ENCODE measurements at regions of chr3 and their contacts with region 1.

Region 1: GRCh38 chr3:42096796-42097565 is 5.8 kb downstream of the TRAK1 start:
- DNase-seq: no peak
- H3K4me3 ChIP-seq: no peak overlapping the region
- H3K27ac ChIP-seq: no peak overlapping the region
- H3K4me1 ChIP-seq: no peaks in the 10 kb centered on the region
- H3K27me3 ChIP-seq: no peaks in the 10 kb centered on the region
- CTCF ChIP-seq: no peak

Region 2: GRCh38 chr3:41893977-41894376 is 203.0 kb before region 1 on chr3:
- intact Hi-C with region 1: loop called (anchors 5 kb)
- DNase-seq: peak; percentile 37
- H3K4me3 ChIP-seq: no peak overlapping the region
- H3K27ac ChIP-seq: no peak overlapping the region
- H3K4me1 ChIP-seq: no peaks in the 10 kb centered on the region
- H3K27me3 ChIP-seq: no peaks in the 10 kb centered on the region
- CTCF ChIP-seq: peak; percentile 45

Region 3: GRCh38 chr3:41961750-41962679 is 135.0 kb before region 1 on chr3 and contains the start of gene ULK4:
- intact Hi-C with region 1: loop called (anchors 5 kb)
- DNase-seq: peak; percentile 98
- H3K4me3 ChIP-seq: peak within 1 kb of the TSS; percentile 89
- H3K27ac ChIP-seq: peak within 1 kb of the TSS; percentile 82
- H3K4me1 ChIP-seq: peaks cover 5% of the 10 kb centered on the region
- H3K27me3 ChIP-seq: no peaks in the 10 kb centered on the region
- CTCF ChIP-seq: no peak
- total RNA-seq, gene ULK4: 4.4 to 8.3 TPM

Region 4: DNA sequence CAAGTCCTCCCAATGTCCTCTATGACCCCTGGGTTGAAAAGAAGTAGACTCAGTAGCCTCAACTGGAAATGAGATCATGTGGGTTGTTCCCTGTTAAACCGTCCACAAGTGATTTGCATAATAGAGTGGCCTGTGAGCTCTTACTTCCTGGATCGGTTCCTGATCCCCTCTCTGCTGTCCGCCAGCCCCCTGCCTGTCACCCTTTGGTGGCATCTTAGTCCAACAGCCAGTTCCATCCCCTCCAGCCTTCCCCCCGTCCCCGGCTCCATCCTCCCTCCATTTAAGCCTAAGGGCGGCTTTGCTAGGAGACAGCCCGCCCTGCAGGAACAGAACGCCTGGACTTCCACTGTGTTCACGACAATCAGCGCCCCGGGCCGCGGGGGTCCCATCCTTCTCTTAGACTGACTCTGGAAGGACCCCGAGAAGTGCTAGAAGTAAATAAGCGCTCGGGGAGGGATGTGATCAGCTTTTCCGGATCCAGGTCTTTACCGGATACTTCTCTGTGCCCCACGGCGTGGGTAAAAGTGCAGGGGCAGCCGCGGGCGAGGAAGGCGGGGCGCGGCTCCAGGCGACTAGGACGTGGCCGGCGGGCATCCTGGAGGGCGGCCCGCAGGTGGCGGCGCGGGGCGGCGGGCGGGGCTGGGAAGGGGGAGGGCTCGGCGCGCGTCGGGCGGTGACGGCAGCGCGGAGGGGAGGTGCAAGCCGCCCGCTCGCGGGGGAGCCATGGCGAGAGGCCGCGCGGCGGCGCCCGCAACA is 83.9 kb before region 1 on chr3:
- intact Hi-C with region 1: loop called (anchors 5 kb)
- DNase-seq: peak; percentile 83
- H3K4me3 ChIP-seq: peak overlapping the region; percentile 57
- H3K27ac ChIP-seq: peak overlapping the region; percentile 96
- H3K4me1 ChIP-seq: peaks cover 8% of the 10 kb centered on the region
- H3K27me3 ChIP-seq: no peaks in the 10 kb centered on the region
- CTCF ChIP-seq: no peak

Measured in colonic mucosa (tissue), 4 donors.